GM12878 (cell line): ENCODE measurements at regions of chr13 and their contacts with region 1.

Region 1: GRCh38 chr13:69980799-69981198 is 126.8 kb upstream of the ATXN8OS start:
- DNase-seq: no peak
- ATAC-seq: peak; percentile 68
- H3K4me3 ChIP-seq: no peak overlapping the region
- H3K27ac ChIP-seq: no peak overlapping the region
- H3K4me1 ChIP-seq: no peaks in the 10 kb centered on the region
- H3K27me3 ChIP-seq: no peaks in the 10 kb centered on the region
- CTCF ChIP-seq: no peak
- EP300 ChIP-seq: no peak
- POLR2A ChIP-seq: no peak
- RAD21 ChIP-seq: no peak

Region 2: DNA sequence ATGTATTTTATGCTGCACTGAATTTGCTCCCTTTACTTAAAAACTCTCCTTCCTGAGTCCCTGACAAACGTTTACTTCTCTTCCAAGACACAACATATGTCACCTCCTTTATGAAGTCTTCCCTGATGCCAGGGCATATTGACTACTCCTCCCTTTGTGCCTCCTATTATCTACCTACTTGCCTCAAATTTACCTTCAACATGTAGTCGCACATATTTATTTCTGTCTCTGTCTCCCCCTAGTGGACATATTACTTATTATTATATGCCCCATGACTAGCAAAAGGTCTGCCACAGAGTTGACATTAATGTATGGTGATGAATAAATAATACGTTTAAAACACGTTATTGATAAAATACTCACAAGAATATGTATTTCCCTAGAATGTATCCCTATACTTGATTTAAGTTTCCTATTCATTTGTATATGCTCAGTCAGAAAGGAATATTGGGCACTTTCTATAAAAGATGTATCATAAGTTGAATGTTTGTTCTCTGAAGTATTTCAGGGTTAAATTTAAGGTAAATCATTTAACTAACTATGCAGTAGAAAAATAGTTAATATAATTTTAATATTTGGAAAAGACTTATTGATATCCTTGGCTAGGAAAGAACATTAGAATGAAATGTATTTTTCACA is 123.5 kb before region 1 on chr13:
- CTCF ChIA-PET with region 1: no interaction called
- POLR2A ChIA-PET with region 1: no interaction called
- RAD21 ChIA-PET with region 1: no interaction called
- SMC1A ChIA-PET with region 1: no interaction called
- in situ Hi-C with region 1: no loop called
- intact Hi-C with region 1: no loop called
- DNase-seq: peak; percentile 19
- ATAC-seq: peak; percentile 88
- H3K4me3 ChIP-seq: no peak overlapping the region
- H3K27ac ChIP-seq: no peak overlapping the region
- H3K4me1 ChIP-seq: no peaks in the 10 kb centered on the region
- H3K27me3 ChIP-seq: no peaks in the 10 kb centered on the region
- CTCF ChIP-seq: peak; percentile 50 to 65 (median 54); a peak in 5 of 6 replicates
- EP300 ChIP-seq: no peak
- POLR2A ChIP-seq: no peak
- RAD21 ChIP-seq: peak; percentile 88

Region 3: DNA sequence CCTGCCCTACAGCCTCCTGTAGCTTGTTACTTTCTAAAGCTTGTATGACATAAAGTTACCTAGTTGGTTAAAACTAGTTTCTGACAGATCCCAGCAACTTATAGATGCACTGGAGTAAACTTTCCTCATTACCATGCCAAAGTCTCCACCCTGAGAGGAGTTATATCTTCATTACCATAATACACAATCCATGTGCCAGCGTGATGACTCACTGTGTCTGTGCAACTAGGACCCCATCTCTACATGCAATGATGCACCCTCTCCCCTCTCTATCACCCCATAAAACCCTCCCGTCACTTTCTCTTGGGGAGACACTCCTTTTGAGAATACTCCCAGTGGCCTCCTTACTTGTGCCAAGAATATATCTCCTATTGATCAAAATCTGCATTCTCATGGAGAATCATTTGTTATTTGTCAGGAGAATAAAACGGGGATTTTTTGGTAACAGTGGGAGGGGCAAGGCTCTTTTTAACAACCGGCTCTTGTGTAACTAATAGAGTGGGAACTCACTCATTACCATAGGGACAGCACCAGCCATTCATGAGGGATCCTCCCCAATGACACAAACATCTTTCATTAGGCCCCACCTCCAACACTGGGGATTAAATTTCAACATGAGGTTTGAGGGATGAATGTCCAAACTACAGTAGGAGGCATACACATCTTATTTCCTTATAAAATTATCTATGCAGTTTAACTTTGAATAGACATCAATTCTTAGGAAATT is 108.3 kb before region 1 on chr13:
- CTCF ChIA-PET with region 1: no interaction called
- POLR2A ChIA-PET with region 1: no interaction called
- RAD21 ChIA-PET with region 1: no interaction called
- SMC1A ChIA-PET with region 1: no interaction called
- in situ Hi-C with region 1: no loop called
- intact Hi-C with region 1: no loop called
- DNase-seq: no peak
- ATAC-seq: no peak
- H3K4me3 ChIP-seq: no peak overlapping the region
- H3K27ac ChIP-seq: no peak overlapping the region
- H3K4me1 ChIP-seq: no peaks in the 10 kb centered on the region
- H3K27me3 ChIP-seq: no peaks in the 10 kb centered on the region
- CTCF ChIP-seq: no peak
- EP300 ChIP-seq: no peak
- POLR2A ChIP-seq: no peak
- RAD21 ChIP-seq: no peak

Region 4: GRCh38 chr13:69959041-69959440 is 21.8 kb before region 1 on chr13:
- CTCF ChIA-PET with region 1: interaction called, 4 read pairs
- POLR2A ChIA-PET with region 1: no interaction called
- RAD21 ChIA-PET with region 1: interaction called, 4 read pairs
- SMC1A ChIA-PET with region 1: interaction called, 7 read pairs
- in situ Hi-C with region 1: no loop called
- intact Hi-C with region 1: loop called (anchors 2 kb)
- DNase-seq: no peak
- ATAC-seq: no peak
- H3K4me3 ChIP-seq: no peak overlapping the region
- H3K27ac ChIP-seq: no peak overlapping the region
- H3K4me1 ChIP-seq: no peaks in the 10 kb centered on the region
- H3K27me3 ChIP-seq: no peaks in the 10 kb centered on the region
- CTCF ChIP-seq: no peak
- EP300 ChIP-seq: no peak
- POLR2A ChIP-seq: no peak
- RAD21 ChIP-seq: no peak